H1 (cell line): ENCODE measurements at regions of chr14 and their contacts with region 1.

Region 1: DNA sequence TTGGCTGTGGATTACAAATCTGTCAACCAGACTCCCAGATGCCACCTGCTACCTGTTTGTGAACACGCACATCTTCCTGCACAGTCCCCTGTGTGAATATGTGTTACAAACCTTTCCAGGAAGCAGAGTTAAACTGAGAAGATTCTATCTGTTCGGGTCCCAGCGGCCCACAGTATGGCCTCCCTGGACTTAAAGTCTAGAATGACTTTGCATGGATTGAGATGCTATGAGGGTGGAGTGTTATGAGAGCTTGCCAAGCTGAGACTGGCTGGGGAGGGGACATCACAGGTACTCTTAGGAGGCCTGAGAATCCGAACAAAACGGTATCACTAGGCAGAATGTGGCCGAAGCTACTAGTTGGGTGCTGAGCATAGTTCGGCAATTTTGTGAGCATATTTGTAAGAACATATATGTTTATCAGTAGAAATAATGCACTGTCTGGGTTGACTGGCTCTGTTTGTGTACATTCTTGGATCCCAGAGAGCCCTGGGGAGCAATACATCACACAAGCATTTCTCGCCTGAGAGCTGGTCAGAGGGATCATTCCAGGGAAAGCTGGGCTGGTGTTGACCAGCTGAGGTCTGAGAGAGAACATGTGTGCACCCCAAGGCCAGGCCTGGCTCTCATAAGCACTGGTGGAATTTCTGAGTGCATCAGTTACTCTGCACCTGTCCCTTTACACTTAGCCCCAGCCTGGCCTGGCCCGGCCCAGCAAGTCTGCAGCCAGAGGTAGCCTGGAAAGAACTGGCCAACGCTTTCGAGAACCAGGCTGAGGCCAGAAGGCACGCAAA is 29.8 kb upstream of the LTBP2 start:
- DNase-seq: no peak
- H3K4me3 ChIP-seq: no peak overlapping the region
- H3K27ac ChIP-seq: no peak overlapping the region
- H3K4me1 ChIP-seq: peaks cover 0 to 3% (median under 1%) of the 10 kb centered on the region in 4 experiments; a peak in 3 of 7 replicates
- H3K27me3 ChIP-seq: no peaks in the 10 kb centered on the region
- CTCF ChIP-seq: no peak
- EP300 ChIP-seq: no peak
- POLR2A ChIP-seq: no peak
- RAD21 ChIP-seq: no peak

Region 2: DNA sequence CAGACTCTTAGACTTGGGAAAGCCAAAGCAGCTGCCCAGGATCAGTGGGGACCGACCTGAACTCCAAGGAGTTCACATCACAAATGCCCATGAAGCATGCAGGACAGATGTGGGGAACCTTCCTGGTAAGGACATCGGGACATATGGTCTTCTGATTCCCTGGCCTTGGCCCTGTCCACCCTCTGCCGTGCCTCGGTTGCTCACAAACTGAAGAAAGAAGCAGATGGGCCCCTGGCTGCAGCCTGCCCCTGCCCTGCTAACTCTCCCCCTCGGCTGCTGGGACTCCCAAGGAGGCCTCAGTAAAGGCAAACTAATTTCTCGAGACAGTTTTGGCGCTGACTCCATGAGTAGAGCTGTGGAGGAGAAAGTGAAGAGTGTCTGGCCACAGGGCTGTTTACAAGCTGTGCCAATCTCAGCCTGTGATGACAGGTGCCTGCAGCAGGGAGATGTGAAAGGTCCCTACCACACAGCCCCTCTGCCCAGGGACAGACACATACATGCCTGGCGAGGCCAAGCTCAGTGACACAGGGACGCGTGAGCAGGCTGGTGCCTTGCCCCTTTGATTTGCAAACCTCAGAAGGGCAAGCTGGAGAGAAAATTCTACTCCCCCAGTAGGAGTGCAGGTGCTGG is 99.6 kb before region 1 on chr14:
- CTCF ChIA-PET with region 1: no interaction called
- POLR2A ChIA-PET with region 1: no interaction called
- DNase-seq: no peak
- H3K4me3 ChIP-seq: no peak overlapping the region
- H3K27ac ChIP-seq: no peak overlapping the region
- H3K4me1 ChIP-seq: peaks cover 0 to 3% (median 0%) of the 10 kb centered on the region in 4 experiments; a peak in 1 of 7 replicates
- H3K27me3 ChIP-seq: no peaks in the 10 kb centered on the region
- CTCF ChIP-seq: no peak
- EP300 ChIP-seq: no peak
- POLR2A ChIP-seq: no peak
- RAD21 ChIP-seq: no peak

Region 3: DNA sequence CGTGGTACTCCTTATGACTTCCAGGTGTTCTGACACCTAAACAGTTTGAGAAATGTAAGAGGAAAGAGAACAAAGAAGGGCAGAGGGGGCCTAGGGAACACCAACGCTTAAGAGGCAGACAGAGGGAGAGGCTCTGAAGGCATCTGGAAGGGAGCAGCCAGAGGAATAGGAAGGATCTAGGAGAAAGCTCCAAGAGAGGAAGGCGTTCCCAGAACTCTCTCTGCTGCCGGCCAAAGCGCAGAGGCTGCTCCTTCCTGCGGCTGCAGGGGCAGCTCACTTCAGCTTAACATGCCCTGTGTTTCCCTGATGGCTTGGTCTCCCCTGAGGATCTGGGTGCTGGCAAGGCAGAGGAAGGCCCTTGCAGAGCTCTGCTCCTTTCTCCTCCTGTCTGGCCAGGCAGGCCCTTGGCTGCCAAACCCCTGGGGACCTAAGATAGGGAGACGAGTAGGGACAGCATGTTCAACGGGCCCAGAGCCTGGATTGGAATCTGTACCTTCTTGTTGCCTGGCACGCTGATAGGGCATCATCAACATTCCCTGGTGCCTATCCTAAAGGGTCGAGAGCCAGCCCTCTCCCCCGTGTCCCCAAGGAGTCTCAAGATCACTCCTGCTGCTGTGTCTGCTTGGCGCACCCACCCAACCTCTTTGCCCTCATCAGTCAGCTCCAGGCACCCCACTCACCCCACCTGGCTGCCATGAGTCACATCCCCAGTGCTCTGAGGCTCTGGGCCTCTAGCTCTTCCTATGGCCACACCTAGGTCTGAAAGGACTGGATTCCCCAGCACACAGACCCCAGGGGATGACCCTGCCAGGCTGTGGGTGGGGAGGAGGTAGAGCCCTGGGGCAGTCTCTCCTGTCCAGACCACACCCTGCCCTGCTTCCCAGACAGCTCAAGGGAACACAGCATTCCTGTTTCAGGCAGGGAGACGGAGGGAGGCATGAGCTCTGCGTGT is 75.3 kb before region 1 on chr14:
- CTCF ChIA-PET with region 1: no interaction called
- POLR2A ChIA-PET with region 1: no interaction called
- DNase-seq: no peak
- H3K4me3 ChIP-seq: no peak overlapping the region
- H3K27ac ChIP-seq: no peak overlapping the region
- H3K4me1 ChIP-seq: peaks cover 0 to 12% (median 3%) of the 10 kb centered on the region in 4 experiments; a peak in 5 of 7 replicates
- H3K27me3 ChIP-seq: no peaks in the 10 kb centered on the region
- CTCF ChIP-seq: no peak
- EP300 ChIP-seq: no peak
- POLR2A ChIP-seq: no peak
- RAD21 ChIP-seq: no peak

Region 4: DNA sequence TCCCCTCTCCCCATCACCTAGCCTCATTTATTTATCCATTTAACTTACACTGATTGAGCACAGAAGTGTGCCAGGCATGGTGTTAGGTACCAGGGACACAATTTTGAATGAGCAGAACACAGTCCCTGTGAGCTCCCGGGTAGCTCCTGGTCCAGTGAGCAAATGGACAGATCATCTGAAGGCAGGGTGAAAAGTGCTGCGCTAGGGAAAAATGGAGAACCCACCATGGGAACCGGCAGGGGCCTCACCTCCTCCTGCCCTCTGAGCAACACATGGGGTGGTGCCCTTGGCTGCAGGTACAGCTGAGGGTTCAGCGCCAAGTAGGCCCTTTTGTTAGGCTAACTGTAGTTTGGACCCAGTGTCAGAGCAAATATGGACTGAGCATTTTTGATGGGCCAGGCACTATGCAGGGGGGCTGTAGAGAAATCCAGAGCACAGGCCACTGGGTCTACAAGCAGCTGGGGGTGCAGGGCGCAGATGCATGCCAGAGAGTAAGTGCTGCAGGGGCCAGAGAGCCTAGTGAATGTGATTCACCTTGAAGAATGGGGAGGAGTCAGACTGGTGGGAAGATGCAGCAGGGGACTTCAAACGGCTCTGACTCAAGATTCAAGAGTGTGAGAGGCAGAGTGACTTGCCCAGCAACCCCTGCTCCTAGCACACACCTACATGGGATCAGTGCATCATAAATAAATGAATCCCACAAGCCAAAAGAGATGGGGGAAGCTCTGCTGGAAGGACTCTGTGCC is 57.9 kb before region 1 on chr14:
- CTCF ChIA-PET with region 1: no interaction called
- POLR2A ChIA-PET with region 1: no interaction called
- DNase-seq: no peak
- H3K4me3 ChIP-seq: no peak overlapping the region
- H3K27ac ChIP-seq: no peak overlapping the region
- H3K4me1 ChIP-seq: 0 out of 7 replicates have a peak, but pooled peaks cover 0 to 2% (median 0%) of the 10 kb centered on the region in 4 experiments
- H3K27me3 ChIP-seq: no peaks in the 10 kb centered on the region
- CTCF ChIP-seq: no peak
- EP300 ChIP-seq: no peak
- POLR2A ChIP-seq: no peak
- RAD21 ChIP-seq: no peak

Region 5: GRCh38 chr14:74618078-74618952 is 23.5 kb before region 1 on chr14:
- CTCF ChIA-PET with region 1: interaction called, 87 read pairs
- POLR2A ChIA-PET with region 1: interaction called, 4 read pairs
- DNase-seq: no peak
- H3K4me3 ChIP-seq: no peak overlapping the region
- H3K27ac ChIP-seq: no peak overlapping the region
- H3K4me1 ChIP-seq: peaks cover 2 to 5% (median 4%) of the 10 kb centered on the region in 4 experiments; a peak in 4 of 7 replicates
- H3K27me3 ChIP-seq: no peaks in the 10 kb centered on the region; a peak in 2 of 7 replicates
- CTCF ChIP-seq: no peak
- EP300 ChIP-seq: no peak
- POLR2A ChIP-seq: no peak
- RAD21 ChIP-seq: no peak

Region 6: DNA sequence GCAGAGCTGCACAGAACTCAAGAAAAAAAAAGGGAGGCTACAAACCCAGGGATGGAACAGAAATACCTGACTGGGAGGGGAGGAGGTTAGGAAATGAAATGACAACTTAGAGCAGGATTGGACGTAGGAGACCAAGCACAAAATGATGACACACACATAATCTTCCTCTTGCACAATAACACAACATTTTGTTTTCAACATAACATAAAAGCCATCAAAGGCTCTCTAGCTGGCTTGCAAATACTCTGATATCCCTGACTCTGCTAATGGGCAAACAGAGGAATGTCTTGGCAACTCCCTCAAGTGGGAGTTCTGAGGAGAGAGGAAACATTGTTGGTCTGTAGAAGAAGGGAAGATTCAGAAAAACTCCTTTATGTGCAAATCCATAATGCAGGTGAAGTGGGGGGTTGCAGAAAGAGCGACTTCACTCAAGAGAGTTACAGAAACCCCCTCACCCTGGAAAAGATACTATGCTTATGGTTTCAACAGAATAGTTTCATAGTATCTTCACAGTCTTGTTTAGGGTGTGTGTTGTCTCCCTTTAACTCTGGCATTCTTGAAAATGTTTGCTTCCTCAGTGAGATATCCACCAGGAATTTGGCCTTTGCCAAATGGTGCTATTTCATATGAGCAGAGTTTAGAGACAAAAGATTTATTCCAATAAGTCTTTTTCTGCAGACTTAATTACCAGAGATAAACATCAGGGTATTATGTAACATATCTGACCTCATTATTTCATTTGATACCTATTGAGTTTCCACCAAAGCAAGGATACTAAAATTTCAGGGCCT is 14.0 kb after region 1 on chr14:
- CTCF ChIA-PET with region 1: interaction called, 12 read pairs
- POLR2A ChIA-PET with region 1: interaction called, 26 read pairs
- DNase-seq: no peak
- H3K4me3 ChIP-seq: no peak overlapping the region
- H3K27ac ChIP-seq: no peak overlapping the region
- H3K4me1 ChIP-seq: no peaks in the 10 kb centered on the region
- H3K27me3 ChIP-seq: no peaks in the 10 kb centered on the region
- CTCF ChIP-seq: no peak
- EP300 ChIP-seq: no peak
- POLR2A ChIP-seq: no peak
- RAD21 ChIP-seq: no peak